ENCODE measurements at regions of chr14 and their contacts with region 1.

Region 1: DNA sequence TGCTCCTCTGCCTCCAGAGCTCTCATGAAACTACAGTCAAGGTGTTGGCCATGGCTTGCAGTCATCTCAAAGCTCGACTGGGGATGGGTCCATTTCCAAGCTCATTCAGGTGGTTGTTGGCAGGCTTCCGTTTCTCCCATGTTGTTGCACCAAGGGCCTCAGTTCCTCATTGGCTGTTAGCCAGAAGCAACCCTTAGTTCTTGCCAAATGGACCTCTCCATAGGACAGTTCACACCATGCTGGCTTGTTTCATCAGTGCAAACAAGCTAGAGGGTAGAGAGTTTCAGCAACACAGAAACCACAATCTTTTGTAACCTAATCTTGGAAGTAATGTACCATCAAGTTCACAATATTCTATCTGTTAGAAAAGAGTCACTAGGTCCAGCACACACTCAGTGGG is 22.7 kb upstream of the PPM1A start:
- DNase-seq: no peak
- ATAC-seq: no peak
- H3K4me3 ChIP-seq: no peak overlapping the region
- H3K27ac ChIP-seq: no peak overlapping the region
- H3K4me1 ChIP-seq: peaks cover 2% of the 10 kb centered on the region
- H3K27me3 ChIP-seq: no peaks in the 10 kb centered on the region
- CTCF ChIP-seq: no peak
- EP300 ChIP-seq: no peak
- POLR2A ChIP-seq: no peak
- RAD21 ChIP-seq: no peak

Region 2: GRCh38 chr14:60212503-60213371 is 13.6 kb before region 1 on chr14:
- CTCF ChIA-PET with region 1: interaction called, 9 read pairs
- POLR2A ChIA-PET with region 1: interaction called, 241 read pairs
- RAD21 ChIA-PET with region 1: interaction called, 30 read pairs
- SMC1A ChIA-PET with region 1: interaction called, 202 read pairs
- in situ Hi-C with region 1: no loop called
- intact Hi-C with region 1: loop called (anchors 2 kb)
- DNase-seq: peak; percentile 98
- ATAC-seq: peak; percentile 89
- H3K4me3 ChIP-seq: no peak overlapping the region
- H3K27ac ChIP-seq: peak overlapping the region; percentile 93
- H3K4me1 ChIP-seq: peaks cover 39% of the 10 kb centered on the region
- H3K27me3 ChIP-seq: no peaks in the 10 kb centered on the region
- CTCF ChIP-seq: no peak
- EP300 ChIP-seq: peak; percentile 73 to 86
- POLR2A ChIP-seq: no peak; the same call in 1 of the 2 replicates
- RAD21 ChIP-seq: no peak

Region 3: GRCh38 chr14:60242429-60242828 is 16.1 kb after region 1 on chr14:
- CTCF ChIA-PET with region 1: interaction called, 7 read pairs
- POLR2A ChIA-PET with region 1: interaction called, 78 read pairs
- RAD21 ChIA-PET with region 1: interaction called, 30 read pairs
- SMC1A ChIA-PET with region 1: interaction called, 19 read pairs
- in situ Hi-C with region 1: no loop called
- intact Hi-C with region 1: no loop called
- DNase-seq: no peak
- ATAC-seq: no peak
- H3K4me3 ChIP-seq: no peak overlapping the region
- H3K27ac ChIP-seq: no peak overlapping the region
- H3K4me1 ChIP-seq: peaks cover 10% of the 10 kb centered on the region
- H3K27me3 ChIP-seq: no peaks in the 10 kb centered on the region
- CTCF ChIP-seq: no peak
- EP300 ChIP-seq: no peak
- POLR2A ChIP-seq: no peak
- RAD21 ChIP-seq: no peak

Measured in GM12878 (cell line).